ENCODE measurements at regions of chr5 and their contacts with region 1.

Region 1: DNA sequence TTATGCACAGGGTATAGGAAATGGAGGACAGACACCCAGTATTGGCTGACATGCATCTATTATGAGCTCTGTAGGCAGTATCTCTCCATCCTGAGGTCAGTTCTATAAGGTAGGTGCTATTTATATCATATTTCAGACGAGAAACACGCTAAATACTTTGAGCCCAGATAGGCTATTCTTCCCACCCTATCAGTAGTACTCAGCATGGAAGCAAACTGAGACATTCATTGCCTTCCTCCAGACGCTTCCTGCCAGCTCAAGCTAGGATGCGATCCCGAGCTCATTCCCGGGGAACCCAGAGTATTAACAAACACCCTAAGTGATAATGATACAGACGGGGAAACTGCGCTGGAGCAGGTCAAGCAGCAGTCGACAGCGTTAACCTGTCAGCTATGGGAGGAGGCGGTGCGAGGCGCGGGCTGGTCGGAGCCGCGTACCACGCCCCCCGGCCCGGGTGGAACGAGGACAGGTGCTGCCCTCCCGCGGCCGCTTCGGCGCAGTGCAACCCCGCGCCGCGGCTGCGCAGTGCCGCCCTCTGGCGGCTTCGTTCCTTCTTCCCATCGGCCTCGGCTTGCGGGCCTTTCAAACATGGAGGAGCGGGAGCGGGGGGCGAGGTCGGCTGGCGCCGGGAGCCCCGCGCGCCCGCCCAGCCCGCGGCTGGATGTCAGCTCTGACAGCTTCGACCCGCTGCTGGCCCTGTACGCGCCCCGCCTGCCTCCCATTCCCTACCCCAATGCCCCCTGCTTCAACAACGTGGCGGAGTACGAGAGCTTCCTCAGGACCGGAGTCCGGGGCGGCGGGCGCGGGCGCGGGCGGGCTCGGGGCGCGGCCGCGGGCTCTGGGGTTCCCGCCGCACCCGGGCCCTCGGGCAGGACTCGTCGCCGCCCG is at the start of gene LSM11:
- DNase-seq: peak; percentile 86 to 90 (median 87)
- H3K4me3 ChIP-seq: peak within 1 kb of the TSS; percentile 66
- H3K4me3 Mint-ChIP-seq: peak within 1 kb of the TSS; percentile 87 to 95 (median 94)
- H3K27ac ChIP-seq: no peak within 1 kb of the TSS
- H3K27ac Mint-ChIP-seq: peak within 1 kb of the TSS; percentile 64 to 92 (median 86)
- H3K4me1 ChIP-seq: peaks cover 14% of the 10 kb centered on the region
- H3K4me1 Mint-ChIP-seq: peaks cover 23 to 33% (median 26%) of the 10 kb centered on the region in 3 donors
- H3K27me3 ChIP-seq: no peaks in the 10 kb centered on the region
- H3K27me3 Mint-ChIP-seq: peaks cover 0 to 2% of the 10 kb centered on the region in 2 donors
- total RNA-seq, gene LSM11: 7.8 to 7.9 TPM

Region 2: GRCh38 chr5:157328277-157328912 is 415.0 kb before region 1 on chr5:
- CTCF ChIA-PET with region 1: interaction called, 14 read pairs
- POLR2A ChIA-PET with region 1: no interaction called
- DNase-seq: peak; percentile 31 to 68 (median 59)
- H3K4me3 ChIP-seq: peak overlapping the region; percentile 7
- H3K4me3 Mint-ChIP-seq: peak overlapping the region in 2 of 7 donors; percentile 11 to 35
- H3K27ac ChIP-seq: no peak overlapping the region
- H3K27ac Mint-ChIP-seq: peak overlapping the region; percentile 2 to 91 (median 79)
- H3K4me1 ChIP-seq: peaks cover 30% of the 10 kb centered on the region
- H3K4me1 Mint-ChIP-seq: peaks cover 12 to 31% (median 27%) of the 10 kb centered on the region in 3 donors
- H3K27me3 ChIP-seq: no peaks in the 10 kb centered on the region
- H3K27me3 Mint-ChIP-seq: no peaks in the 10 kb centered on the region

Region 3: GRCh38 chr5:157540707-157541446 is 202.5 kb before region 1 on chr5:
- CTCF ChIA-PET with region 1: interaction called, 14 read pairs
- POLR2A ChIA-PET with region 1: no interaction called
- DNase-seq: peak in 2 of 5 donors; percentile 9 to 36
- H3K4me3 ChIP-seq: peak overlapping the region; percentile 42
- H3K4me3 Mint-ChIP-seq: peak overlapping the region; percentile 29 to 86 (median 78)
- H3K27ac ChIP-seq: peak overlapping the region; percentile 62
- H3K27ac Mint-ChIP-seq: peak overlapping the region; percentile 84 to 97 (median 92)
- H3K4me1 ChIP-seq: peaks cover 68% of the 10 kb centered on the region
- H3K4me1 Mint-ChIP-seq: peaks cover 67 to 81% (median 79%) of the 10 kb centered on the region in 3 donors
- H3K27me3 ChIP-seq: no peaks in the 10 kb centered on the region
- H3K27me3 Mint-ChIP-seq: no peaks in the 10 kb centered on the region

Region 4: DNA sequence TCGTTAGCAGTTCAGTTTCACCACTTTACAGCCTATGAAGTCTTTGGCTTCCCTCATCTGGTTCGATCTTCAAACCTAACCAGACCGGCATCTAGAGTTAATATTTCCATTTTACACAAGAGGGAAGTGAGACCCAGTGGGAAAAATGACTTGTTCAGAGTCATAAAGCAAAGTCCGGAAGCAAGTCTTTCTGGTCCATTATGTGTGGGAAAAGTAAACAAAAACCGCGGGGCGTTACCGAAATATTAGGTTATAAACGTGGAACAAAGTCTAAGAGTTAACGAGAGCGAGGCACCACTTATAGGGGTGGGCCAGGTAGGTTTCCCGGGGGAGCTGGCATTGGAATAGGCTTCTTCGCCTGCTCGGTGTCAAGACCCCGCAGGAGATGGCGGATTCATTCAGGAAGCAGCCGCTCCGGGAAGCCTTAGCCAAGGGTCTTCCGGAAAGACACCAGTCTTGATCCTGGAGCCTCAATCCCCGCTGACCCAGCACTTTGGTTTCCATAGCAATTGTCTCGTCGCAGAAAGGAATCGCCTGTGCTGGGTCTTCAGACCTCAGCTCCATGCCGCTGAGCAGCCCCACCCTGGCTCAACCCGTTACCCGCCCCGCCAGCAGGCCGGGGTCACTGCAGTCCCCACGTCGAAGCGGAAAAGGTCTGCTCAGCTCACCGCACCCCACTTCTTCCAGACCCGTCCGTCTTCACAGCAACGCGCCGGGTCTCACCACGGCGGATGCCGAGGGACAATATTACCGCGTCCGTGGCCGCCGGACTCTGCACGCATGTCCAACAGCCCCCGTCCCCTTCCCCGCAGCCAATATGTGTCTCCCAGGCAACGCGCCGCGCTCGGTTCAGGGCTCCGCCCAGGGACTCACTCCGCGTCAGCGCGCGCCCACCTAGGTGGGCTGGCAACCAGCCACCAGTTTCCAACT is 72.5 kb before region 1 on chr5 and contains the start of gene C5orf52:
- CTCF ChIA-PET with region 1: interaction called, 17 read pairs
- POLR2A ChIA-PET with region 1: no interaction called
- DNase-seq: peak in 4 of 5 donors; percentile 3 to 42 (median 12)
- H3K4me3 ChIP-seq: peak within 1 kb of the TSS; percentile 47
- H3K4me3 Mint-ChIP-seq: peak within 1 kb of the TSS; percentile 86 to 93 (median 91)
- H3K27ac ChIP-seq: no peak within 1 kb of the TSS
- H3K27ac Mint-ChIP-seq: peak within 1 kb of the TSS in 7 of 8 donors; percentile 15 to 89 (median 78)
- H3K4me1 ChIP-seq: peaks cover 12% of the 10 kb centered on the region
- H3K4me1 Mint-ChIP-seq: peaks cover 18 to 27% (median 24%) of the 10 kb centered on the region in 3 donors
- H3K27me3 ChIP-seq: no peaks in the 10 kb centered on the region
- H3K27me3 Mint-ChIP-seq: peaks cover 27 to 32% of the 10 kb centered on the region in 2 donors
- total RNA-seq, gene C5orf52: not detected

Region 5: GRCh38 chr5:157761690-157762621 is 18.5 kb after region 1 on chr5:
- CTCF ChIA-PET with region 1: interaction called, 12 read pairs
- POLR2A ChIA-PET with region 1: no interaction called
- DNase-seq: peak in 2 of 5 donors; percentile 17 to 24
- H3K4me3 ChIP-seq: no peak overlapping the region
- H3K4me3 Mint-ChIP-seq: no peak overlapping the region
- H3K27ac ChIP-seq: no peak overlapping the region
- H3K27ac Mint-ChIP-seq: peak overlapping the region in 1 of 8 donors; percentile 11
- H3K4me1 ChIP-seq: no peaks in the 10 kb centered on the region
- H3K4me1 Mint-ChIP-seq: peaks cover 0 to 5% (median 0%) of the 10 kb centered on the region in 3 donors
- H3K27me3 ChIP-seq: no peaks in the 10 kb centered on the region
- H3K27me3 Mint-ChIP-seq: no peaks in the 10 kb centered on the region

Region 6: DNA sequence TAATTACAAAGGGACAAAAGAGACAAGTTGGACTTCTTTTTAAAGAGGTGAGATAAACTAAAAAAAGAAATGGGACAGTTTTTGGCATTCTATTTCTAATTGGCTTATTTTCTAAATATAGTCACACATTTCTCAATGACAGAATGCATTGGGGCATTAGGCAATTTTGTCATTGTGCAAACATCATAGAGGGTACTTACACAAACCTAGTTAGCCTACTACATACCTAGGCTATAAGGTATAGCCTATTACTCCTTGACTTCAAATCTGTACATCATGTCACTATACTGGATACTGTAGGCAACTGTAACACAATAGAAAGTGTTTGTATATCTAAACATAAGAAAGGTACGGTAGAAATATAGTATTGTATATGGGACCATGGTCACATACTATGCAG is 56.2 kb after region 1 on chr5:
- CTCF ChIA-PET with region 1: no interaction called
- POLR2A ChIA-PET with region 1: no interaction called
- DNase-seq: no peak
- H3K4me3 ChIP-seq: no peak overlapping the region
- H3K4me3 Mint-ChIP-seq: no peak overlapping the region
- H3K27ac ChIP-seq: no peak overlapping the region
- H3K27ac Mint-ChIP-seq: no peak overlapping the region
- H3K4me1 ChIP-seq: no peaks in the 10 kb centered on the region
- H3K4me1 Mint-ChIP-seq: peaks cover 0 to 3% (median 1%) of the 10 kb centered on the region in 3 donors
- H3K27me3 ChIP-seq: no peaks in the 10 kb centered on the region
- H3K27me3 Mint-ChIP-seq: no peaks in the 10 kb centered on the region